CD4-positive, alpha-beta T cell (primary cell): ENCODE measurements at regions of chr6 and their contacts with region 1.

Region 1: DNA sequence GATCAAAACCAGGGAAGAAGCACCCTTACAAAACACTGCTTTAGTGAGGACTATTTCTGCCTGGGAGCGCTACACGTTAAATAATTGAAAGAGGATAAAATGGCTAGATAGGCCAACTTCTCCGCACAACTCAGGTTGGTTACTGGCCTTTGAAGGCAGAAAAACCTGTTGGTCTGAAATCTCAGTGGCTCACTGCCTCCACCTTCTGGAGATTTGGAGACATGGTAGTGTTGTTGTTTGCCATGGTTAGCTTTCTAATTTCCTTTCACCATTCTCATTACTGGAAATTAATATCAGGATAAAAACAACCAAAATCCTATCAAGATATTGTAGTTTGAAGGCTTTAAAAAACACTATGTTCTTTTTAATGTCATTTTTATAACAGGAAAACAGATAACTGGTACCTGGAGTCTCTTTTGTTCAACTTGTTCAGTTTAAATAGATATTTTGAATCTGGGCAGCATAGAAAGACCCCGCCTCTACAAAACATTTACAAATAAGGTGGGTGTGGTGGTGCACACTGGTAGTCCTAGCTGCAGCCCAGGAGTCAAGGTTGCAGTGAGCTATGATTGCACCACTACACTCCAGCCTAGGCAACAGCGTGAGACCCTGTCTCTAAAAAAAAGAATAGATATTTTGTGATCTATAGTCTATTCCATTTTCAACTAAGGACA is 27.5 kb upstream of the BCLAF1 start:
- DNase-seq: peak; percentile 33 to 87 (median 50)
- ATAC-seq: peak; percentile 99
- H3K4me3 ChIP-seq: no peak overlapping the region
- H3K4me3 Mint-ChIP-seq: no peak overlapping the region
- H3K27ac ChIP-seq: no peak overlapping the region
- H3K27ac Mint-ChIP-seq: no peak overlapping the region
- H3K4me1 ChIP-seq: no peaks in the 10 kb centered on the region
- H3K4me1 Mint-ChIP-seq: no peaks in the 10 kb centered on the region
- H3K27me3 ChIP-seq: no peaks in the 10 kb centered on the region
- H3K27me3 Mint-ChIP-seq: no peaks in the 10 kb centered on the region
- CTCF ChIP-seq: peak; percentile 83

Region 2: DNA sequence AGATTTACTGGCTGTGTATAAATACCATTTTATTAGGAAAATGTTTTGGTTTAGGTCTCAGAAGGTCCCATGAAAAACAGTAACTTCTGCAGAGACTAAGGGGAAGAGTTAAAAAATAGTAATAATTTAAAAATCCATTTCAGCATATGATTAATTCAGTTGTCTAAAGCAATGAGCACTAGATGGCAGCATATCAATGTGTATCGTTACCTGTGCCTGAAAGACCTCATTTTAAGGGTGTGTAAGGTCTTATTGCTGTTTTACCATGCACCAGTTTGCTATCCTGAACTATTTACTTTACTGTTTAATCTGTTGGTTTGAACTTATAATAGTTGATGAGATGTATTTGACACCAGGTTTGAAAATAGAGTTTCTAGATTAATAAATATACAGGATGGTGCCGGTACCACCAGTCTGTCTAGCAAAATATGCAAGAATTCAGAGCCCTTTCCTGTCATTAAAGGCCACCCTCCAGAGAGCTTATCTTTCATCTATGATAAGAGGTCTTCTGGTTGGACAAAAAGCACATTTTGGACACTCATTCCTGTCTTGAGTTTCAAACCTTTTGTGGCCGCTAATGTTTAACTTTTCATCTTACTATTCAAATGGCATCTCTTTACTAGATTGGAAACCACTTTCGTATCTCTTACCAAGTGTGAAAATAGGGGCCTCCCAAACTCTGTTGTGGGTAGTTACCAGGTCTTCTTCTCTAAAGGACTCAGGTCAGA is 810.7 kb before region 1 on chr6:
- CTCF ChIA-PET with region 1: no interaction called
- POLR2A ChIA-PET with region 1: no interaction called
- intact Hi-C with region 1: loop called (anchors 1 to 2 kb)
- DNase-seq: peak in 4 of 14 experiments; percentile 10 to 71 (median 66)
- ATAC-seq: peak; percentile 84
- H3K4me3 ChIP-seq: no peak overlapping the region
- H3K4me3 Mint-ChIP-seq: no peak overlapping the region
- H3K27ac ChIP-seq: no peak overlapping the region
- H3K27ac Mint-ChIP-seq: no peak overlapping the region
- H3K4me1 ChIP-seq: no peaks in the 10 kb centered on the region
- H3K4me1 Mint-ChIP-seq: no peaks in the 10 kb centered on the region
- H3K27me3 ChIP-seq: no peaks in the 10 kb centered on the region
- H3K27me3 Mint-ChIP-seq: no peaks in the 10 kb centered on the region
- CTCF ChIP-seq: peak; percentile 79

Region 3: GRCh38 chr6:135909737-135910387 is 407.3 kb before region 1 on chr6:
- CTCF ChIA-PET with region 1: no interaction called
- POLR2A ChIA-PET with region 1: no interaction called
- intact Hi-C with region 1: loop called in 1 of 2 experiments (anchors 2 kb)
- DNase-seq: peak; percentile 18 to 85 (median 48)
- ATAC-seq: peak; percentile 91
- H3K4me3 ChIP-seq: no peak overlapping the region
- H3K4me3 Mint-ChIP-seq: no peak overlapping the region
- H3K27ac ChIP-seq: no peak overlapping the region
- H3K27ac Mint-ChIP-seq: no peak overlapping the region
- H3K4me1 ChIP-seq: peaks cover 3% of the 10 kb centered on the region
- H3K4me1 Mint-ChIP-seq: peaks cover 6% of the 10 kb centered on the region
- H3K27me3 ChIP-seq: no peaks in the 10 kb centered on the region
- H3K27me3 Mint-ChIP-seq: no peaks in the 10 kb centered on the region
- CTCF ChIP-seq: peak; percentile 70

Region 4: DNA sequence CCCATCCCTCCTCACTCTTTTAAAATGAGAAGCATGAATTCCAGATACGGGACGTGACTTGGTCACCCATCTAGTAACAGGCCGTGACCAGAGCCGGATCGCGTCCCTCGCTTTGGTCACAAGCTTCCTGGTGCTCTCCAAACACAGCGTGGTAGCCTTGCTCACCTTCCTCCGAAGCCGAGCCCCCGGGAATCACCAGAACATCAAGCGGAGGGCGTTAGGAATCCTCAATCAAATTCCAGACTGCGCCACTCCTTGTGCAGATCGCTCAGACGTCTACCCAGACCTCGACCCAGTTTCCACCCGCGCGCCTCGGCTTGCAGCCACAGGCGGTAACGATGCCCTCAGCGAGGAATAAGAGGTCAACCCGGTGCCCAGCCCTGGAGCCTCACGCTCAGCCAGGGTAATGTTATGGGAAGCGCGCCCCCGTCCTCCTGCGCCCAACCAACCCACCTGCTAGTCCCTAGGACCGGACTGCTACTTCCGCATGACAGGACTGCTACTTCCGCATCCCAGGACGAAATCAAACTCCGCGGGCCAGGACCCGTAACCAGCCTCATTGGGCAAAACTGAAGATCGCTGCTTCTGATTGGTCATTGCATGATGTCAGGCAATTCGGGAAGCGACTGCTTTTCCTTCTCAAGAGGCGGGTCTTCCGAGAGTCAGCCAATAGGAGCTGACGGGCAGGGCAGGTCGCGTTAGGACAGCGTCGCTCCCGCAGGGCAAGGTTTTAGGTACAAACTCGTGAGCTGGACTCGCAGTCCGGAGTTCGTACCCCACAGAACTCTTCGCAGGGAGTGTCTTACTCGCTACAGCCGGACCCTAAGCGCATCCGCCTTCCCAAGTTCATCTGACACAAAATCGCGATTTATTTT is 67.1 kb before region 1 on chr6 and contains the start of gene MTFR2:
- CTCF ChIA-PET with region 1: interaction called, 14 read pairs
- POLR2A ChIA-PET with region 1: no interaction called
- intact Hi-C with region 1: loop called (anchors 5 kb)
- DNase-seq: peak; percentile 80 to 99 (median 87)
- ATAC-seq: peak; percentile 95
- H3K4me3 ChIP-seq: peak within 1 kb of the TSS; percentile 79
- H3K4me3 Mint-ChIP-seq: peak within 1 kb of the TSS; percentile 95
- H3K27ac ChIP-seq: no peak within 1 kb of the TSS
- H3K27ac Mint-ChIP-seq: peak within 1 kb of the TSS; percentile 54
- H3K4me1 ChIP-seq: peaks cover 20% of the 10 kb centered on the region
- H3K4me1 Mint-ChIP-seq: peaks cover 39% of the 10 kb centered on the region
- H3K27me3 ChIP-seq: no peaks in the 10 kb centered on the region
- H3K27me3 Mint-ChIP-seq: no peaks in the 10 kb centered on the region
- CTCF ChIP-seq: no peak
- total RNA-seq, gene MTFR2: 1.1 to 1.2 TPM

Region 5: GRCh38 chr6:136280032-136280609 is 37.0 kb before region 1 on chr6:
- CTCF ChIA-PET with region 1: interaction called, 26 read pairs
- POLR2A ChIA-PET with region 1: no interaction called
- intact Hi-C with region 1: loop called in 1 of 2 experiments (anchors 5 kb)
- DNase-seq: no peak
- ATAC-seq: no peak
- H3K4me3 ChIP-seq: no peak overlapping the region
- H3K4me3 Mint-ChIP-seq: peak overlapping the region; percentile 5
- H3K27ac ChIP-seq: no peak overlapping the region
- H3K27ac Mint-ChIP-seq: peak overlapping the region; percentile 3
- H3K4me1 ChIP-seq: peaks cover 15% of the 10 kb centered on the region
- H3K4me1 Mint-ChIP-seq: peaks cover 82% of the 10 kb centered on the region
- H3K27me3 ChIP-seq: no peaks in the 10 kb centered on the region
- H3K27me3 Mint-ChIP-seq: no peaks in the 10 kb centered on the region
- CTCF ChIP-seq: no peak